ENCODE measurements at regions of chr22 and their contacts with region 1.

Region 1: GRCh38 chr22:22855617-22856308 is 31.9 kb upstream of the IGLL5 start:
- DNase-seq: no peak
- ATAC-seq: peak in 1 of 8 donors; percentile 51
- H3K4me3 ChIP-seq: no peak overlapping the region
- H3K27ac ChIP-seq: no peak overlapping the region
- H3K4me1 ChIP-seq: no peaks in the 10 kb centered on the region
- H3K27me3 ChIP-seq: peaks cover 0 to 66% (median 47%) of the 10 kb centered on the region in 7 donors
- CTCF ChIP-seq: peak in 7 of 9 donors; percentile 10 to 55 (median 19)

Region 2: GRCh38 chr22:22951035-22951434 is 95.3 kb after region 1 on chr22:
- intact Hi-C with region 1: loop called in 3 of 10 experiments (anchors 2 to 10 kb)
- DNase-seq: no peak
- ATAC-seq: no peak
- H3K4me3 ChIP-seq: no peak overlapping the region
- H3K27ac ChIP-seq: no peak overlapping the region
- H3K4me1 ChIP-seq: peaks cover 0 to 10% (median 0%) of the 10 kb centered on the region in 9 donors
- H3K27me3 ChIP-seq: peaks cover 0 to 81% (median 52%) of the 10 kb centered on the region in 7 donors
- CTCF ChIP-seq: no peak